Dendritic cell treated with granulocyte-macrophage colony-stimulating factor and Interleukin-4, amounts not matched to agents 40 ng/mL and 50 ng/mL, for 4 days (primary cell): ENCODE measurements at regions of chr10 and their contacts with region 1.

Region 1: DNA sequence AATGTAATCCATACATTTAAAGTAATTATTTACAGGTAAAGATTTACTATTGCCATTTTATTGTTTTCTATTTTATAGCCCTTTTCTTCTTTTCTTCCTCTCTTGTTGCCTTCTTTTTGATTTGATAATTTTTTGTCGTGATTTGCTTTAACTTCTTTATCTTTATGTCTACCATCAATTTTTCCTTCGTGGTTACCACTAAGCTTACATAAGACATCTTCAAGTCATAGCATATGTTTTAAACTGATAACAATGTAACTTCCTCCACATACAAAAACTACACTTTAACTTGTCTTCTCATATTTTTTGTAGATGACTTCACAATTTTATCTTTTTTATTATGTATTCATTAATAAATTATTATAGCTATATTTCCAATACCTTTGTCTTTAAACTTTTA is 316.6 kb downstream of the PLXDC2 start:
- H3K4me3 Mint-ChIP-seq: no peak overlapping the region
- H3K27ac Mint-ChIP-seq: no peak overlapping the region
- H3K4me1 Mint-ChIP-seq: peaks cover 22% of the 10 kb centered on the region
- H3K27me3 Mint-ChIP-seq: no peaks in the 10 kb centered on the region

Region 2: GRCh38 chr10:19828278-19829049 is 304.4 kb before region 1 on chr10:
- intact Hi-C with region 1: loop called (anchors 5 kb)
- H3K4me3 Mint-ChIP-seq: peak overlapping the region; percentile 4
- H3K27ac Mint-ChIP-seq: peak overlapping the region; percentile 54
- H3K4me1 Mint-ChIP-seq: peaks cover 82% of the 10 kb centered on the region
- H3K27me3 Mint-ChIP-seq: no peaks in the 10 kb centered on the region